ENCODE measurements at regions of chr3 and their contacts with region 1.

Region 1: GRCh38 chr3:146640955-146641867 is 36.1 kb upstream of the PLSCR5 start:
- DNase-seq: peak in 4 of 5 donors; percentile 3 to 22 (median 8)
- H3K4me3 ChIP-seq: no peak overlapping the region
- H3K4me3 Mint-ChIP-seq: no peak overlapping the region
- H3K27ac ChIP-seq: no peak overlapping the region
- H3K27ac Mint-ChIP-seq: no peak overlapping the region
- H3K4me1 ChIP-seq: no peaks in the 10 kb centered on the region
- H3K4me1 Mint-ChIP-seq: no peaks in the 10 kb centered on the region
- H3K27me3 ChIP-seq: no peaks in the 10 kb centered on the region
- H3K27me3 Mint-ChIP-seq: no peaks in the 10 kb centered on the region

Region 2: GRCh38 chr3:146065573-146066006 is 575.6 kb before region 1 on chr3:
- CTCF ChIA-PET with region 1: interaction called, 3 read pairs
- POLR2A ChIA-PET with region 1: no interaction called
- intact Hi-C with region 1: loop called (anchors 2 kb)
- DNase-seq: peak in 1 of 5 donors; percentile 14
- H3K4me3 ChIP-seq: no peak overlapping the region
- H3K4me3 Mint-ChIP-seq: no peak overlapping the region
- H3K27ac ChIP-seq: no peak overlapping the region
- H3K27ac Mint-ChIP-seq: no peak overlapping the region
- H3K4me1 ChIP-seq: no peaks in the 10 kb centered on the region
- H3K4me1 Mint-ChIP-seq: no peaks in the 10 kb centered on the region
- H3K27me3 ChIP-seq: no peaks in the 10 kb centered on the region
- H3K27me3 Mint-ChIP-seq: no peaks in the 10 kb centered on the region

Region 3: GRCh38 chr3:146218880-146219866 is 422.0 kb before region 1 on chr3:
- CTCF ChIA-PET with region 1: no interaction called
- POLR2A ChIA-PET with region 1: no interaction called
- intact Hi-C with region 1: loop called (anchors 1 kb)
- DNase-seq: peak in 4 of 5 donors; percentile 6 to 34 (median 16)
- H3K4me3 ChIP-seq: no peak overlapping the region
- H3K4me3 Mint-ChIP-seq: no peak overlapping the region
- H3K27ac ChIP-seq: no peak overlapping the region
- H3K27ac Mint-ChIP-seq: no peak overlapping the region
- H3K4me1 ChIP-seq: no peaks in the 10 kb centered on the region
- H3K4me1 Mint-ChIP-seq: peaks cover 0 to 2% (median 0%) of the 10 kb centered on the region in 4 donors
- H3K27me3 ChIP-seq: no peaks in the 10 kb centered on the region
- H3K27me3 Mint-ChIP-seq: peaks cover 2 to 17% of the 10 kb centered on the region in 2 donors